Activated CD8-positive, alpha-beta T cell treated with anti-CD3 and anti-CD28 coated beads for 36 hours (primary cell): ENCODE measurements at regions of chr17 and their contacts with region 1.

Region 1: DNA sequence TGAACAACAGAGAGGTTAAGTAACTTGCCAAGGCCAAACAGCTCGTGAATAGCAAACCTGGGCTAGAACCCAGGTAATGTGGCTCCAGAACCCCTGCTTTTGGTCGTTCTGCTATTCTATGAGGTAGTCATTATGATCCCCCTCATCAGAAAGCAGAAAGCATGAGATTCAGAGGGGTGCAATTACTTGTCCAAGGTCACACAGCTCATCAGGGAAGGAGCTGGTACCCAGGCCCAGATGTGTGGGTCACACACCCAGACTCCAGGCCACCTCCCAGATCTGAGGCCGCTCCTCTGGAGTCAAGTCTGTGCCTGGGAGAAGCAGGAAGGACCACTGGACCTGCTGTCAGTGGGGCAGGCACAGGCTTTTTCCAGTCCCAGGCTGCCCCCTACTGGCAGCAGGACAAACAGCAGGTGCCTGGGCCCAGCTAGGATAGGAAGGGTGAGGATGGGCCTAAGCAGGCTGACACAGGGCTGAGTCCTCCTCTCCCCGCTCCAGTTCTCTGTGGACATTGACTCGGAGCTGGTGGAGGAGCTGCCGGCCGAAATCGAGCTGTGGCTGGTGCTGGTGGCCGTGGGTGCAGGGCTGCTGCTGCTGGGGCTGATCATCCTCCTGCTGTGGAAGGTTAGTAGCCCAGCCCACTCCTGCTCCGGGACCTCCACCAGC is 7.8 kb upstream of the PDK2 start:
- DNase-seq: peak; percentile 84
- ATAC-seq: peak; percentile 92
- H3K4me3 Mint-ChIP-seq: no peak overlapping the region
- H3K27ac Mint-ChIP-seq: no peak overlapping the region
- H3K4me1 Mint-ChIP-seq: no peaks in the 10 kb centered on the region
- H3K27me3 Mint-ChIP-seq: no peaks in the 10 kb centered on the region
- CTCF ChIP-seq: peak; percentile 100

Region 2: GRCh38 chr17:49987681-49988441 is 99.5 kb before region 1 on chr17:
- CTCF ChIA-PET with region 1: no interaction called
- POLR2A ChIA-PET with region 1: no interaction called
- intact Hi-C with region 1: no loop called
- DNase-seq: no peak
- ATAC-seq: no peak
- H3K4me3 Mint-ChIP-seq: no peak overlapping the region
- H3K27ac Mint-ChIP-seq: no peak overlapping the region
- H3K4me1 Mint-ChIP-seq: no peaks in the 10 kb centered on the region
- H3K27me3 Mint-ChIP-seq: peaks cover 43% of the 10 kb centered on the region
- CTCF ChIP-seq: no peak

Region 3: DNA sequence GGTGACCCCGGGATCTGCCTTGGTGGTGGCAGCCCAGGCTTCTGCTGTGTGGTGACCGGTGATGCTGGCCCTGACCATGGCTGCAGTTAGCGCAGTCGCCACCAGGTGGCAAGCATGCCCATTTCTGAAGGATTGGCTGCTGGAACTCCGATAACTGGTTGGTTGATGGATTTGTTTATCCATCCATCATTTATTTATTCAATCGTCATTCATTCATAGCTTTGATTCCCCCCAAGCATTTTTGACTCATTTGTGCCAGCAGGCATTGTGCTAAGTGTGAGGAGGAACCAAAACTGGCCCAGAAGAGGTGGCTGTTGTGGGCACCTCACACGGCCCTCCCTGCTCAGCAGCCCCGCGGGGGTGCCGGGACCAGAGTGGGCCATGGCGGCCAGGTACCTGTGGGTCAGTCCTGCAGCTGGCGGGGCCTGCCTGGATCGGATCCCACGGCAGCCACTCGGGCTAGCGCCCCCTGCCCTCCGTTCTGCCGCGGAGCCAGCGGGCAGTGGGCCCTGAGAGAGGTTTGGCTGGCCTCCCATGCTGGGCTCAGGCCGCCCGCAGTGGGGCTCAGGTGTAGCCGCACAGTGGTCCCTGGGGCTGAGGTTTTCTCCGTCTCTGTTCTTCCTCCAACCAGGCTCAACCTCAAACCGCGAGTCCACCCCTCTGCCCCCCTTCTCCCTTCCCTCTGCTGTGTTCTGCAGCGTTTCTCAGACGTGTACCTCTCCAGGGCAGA is 60.3 kb before region 1 on chr17:
- CTCF ChIA-PET with region 1: interaction called, 140 read pairs
- POLR2A ChIA-PET with region 1: no interaction called
- intact Hi-C with region 1: loop called (anchors 1 kb)
- DNase-seq: peak; percentile 87
- ATAC-seq: peak; percentile 86
- H3K4me3 Mint-ChIP-seq: no peak overlapping the region
- H3K27ac Mint-ChIP-seq: no peak overlapping the region
- H3K4me1 Mint-ChIP-seq: peaks cover 12% of the 10 kb centered on the region
- H3K27me3 Mint-ChIP-seq: peaks cover 24% of the 10 kb centered on the region
- CTCF ChIP-seq: peak; percentile 97

Region 4: GRCh38 chr17:50055426-50056230 is 31.8 kb before region 1 on chr17 and contains the start of gene ITGA3:
- CTCF ChIA-PET with region 1: interaction called, 60 read pairs
- POLR2A ChIA-PET with region 1: interaction called, 4 read pairs
- intact Hi-C with region 1: no loop called
- DNase-seq: peak; percentile 68
- ATAC-seq: peak; percentile 45
- H3K4me3 Mint-ChIP-seq: peak within 1 kb of the TSS; percentile 82
- H3K27ac Mint-ChIP-seq: peak within 1 kb of the TSS; percentile 14
- H3K4me1 Mint-ChIP-seq: peaks cover 21% of the 10 kb centered on the region
- H3K27me3 Mint-ChIP-seq: peaks cover 3% of the 10 kb centered on the region
- CTCF ChIP-seq: no peak
- total RNA-seq, gene ITGA3: 4.2 to 7.2 TPM

Region 5: GRCh38 chr17:50114849-50115357 is 27.5 kb after region 1 on chr17:
- CTCF ChIA-PET with region 1: interaction called, 10 read pairs
- POLR2A ChIA-PET with region 1: interaction called, 3 read pairs
- intact Hi-C with region 1: no loop called
- DNase-seq: peak; percentile 75
- ATAC-seq: peak; percentile 69
- H3K4me3 Mint-ChIP-seq: no peak overlapping the region
- H3K27ac Mint-ChIP-seq: no peak overlapping the region
- H3K4me1 Mint-ChIP-seq: peaks cover 12% of the 10 kb centered on the region
- H3K27me3 Mint-ChIP-seq: peaks cover 29% of the 10 kb centered on the region
- CTCF ChIP-seq: peak; percentile 63